ENCODE measurements at regions of chr3 and their contacts with region 1.

Region 1: GRCh38 chr3:41900265-41900664 is 61.6 kb downstream of the ULK4 start:
- DNase-seq: peak in 1 of 4 experiments; percentile 29
- ATAC-seq: no peak
- H3K4me3 ChIP-seq: no peak overlapping the region
- H3K27ac ChIP-seq: no peak overlapping the region
- H3K4me1 ChIP-seq: peaks cover 5 to 6% of the 10 kb centered on the region in 2 experiments; a peak in 3 of 5 replicates
- H3K27me3 ChIP-seq: no peaks in the 10 kb centered on the region
- CTCF ChIP-seq: no peak
- EP300 ChIP-seq: no peak; the same call in 1 of the 2 replicates
- POLR2A ChIP-seq: no peak
- RAD21 ChIP-seq: no peak

Region 2: DNA sequence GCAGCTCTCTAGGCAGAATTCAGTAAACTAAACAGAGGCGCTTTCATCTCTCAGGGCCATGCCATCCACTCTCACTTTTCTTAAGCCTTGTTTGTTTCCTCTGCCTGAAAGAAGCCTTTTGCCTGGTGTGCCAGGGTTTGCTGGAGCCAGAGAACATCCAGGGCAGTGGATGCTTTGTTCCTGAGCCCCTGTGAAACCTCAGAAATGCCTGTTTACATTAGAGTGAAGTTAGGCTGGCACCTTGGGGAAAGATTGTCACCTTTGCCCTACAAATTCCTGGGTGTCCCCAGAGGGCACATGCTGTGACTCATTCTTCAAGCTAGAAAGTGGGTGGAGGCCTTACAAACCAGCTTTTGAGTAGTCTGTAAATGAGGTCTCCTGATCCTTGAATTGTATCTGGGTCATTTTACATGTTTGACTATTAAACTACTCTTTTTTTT is 180.2 kb after region 1 on chr3:
- CTCF ChIA-PET with region 1: no interaction called
- POLR2A ChIA-PET with region 1: no interaction called
- in situ Hi-C with region 1: loop called (anchors 25 kb)
- intact Hi-C with region 1: no loop called
- DNase-seq: no peak
- ATAC-seq: no peak
- H3K4me3 ChIP-seq: no peak overlapping the region
- H3K27ac ChIP-seq: no peak overlapping the region
- H3K4me1 ChIP-seq: peaks cover 0 to 5% of the 10 kb centered on the region in 2 experiments; a peak in 2 of 5 replicates
- H3K27me3 ChIP-seq: no peaks in the 10 kb centered on the region
- CTCF ChIP-seq: no peak
- EP300 ChIP-seq: no peak
- POLR2A ChIP-seq: no peak
- RAD21 ChIP-seq: no peak

Measured in K562 (cell line).